Activated T-helper 2 cell treated with anti-CD3 and anti-CD28 coated beads, Interferon-gamma antibody, Interleukin-2, Interleukin-4, amounts not matched to agents 10 μg/mL and 5 μg/mL and 100 μg/mL, durations not matched to agents 14 hours and 24 hours and 36 hours (primary cell): ENCODE measurements at regions of chr2 and their contacts with region 1.

Region 1: GRCh38 chr2:15577071-15577735 is 14.5 kb upstream of the DDX1 start:
- DNase-seq: peak; percentile 74
- H3K4me3 Mint-ChIP-seq: no peak overlapping the region
- H3K27ac Mint-ChIP-seq: no peak overlapping the region
- H3K4me1 Mint-ChIP-seq: no peaks in the 10 kb centered on the region
- H3K27me3 Mint-ChIP-seq: peaks cover 2% of the 10 kb centered on the region

Region 2: DNA sequence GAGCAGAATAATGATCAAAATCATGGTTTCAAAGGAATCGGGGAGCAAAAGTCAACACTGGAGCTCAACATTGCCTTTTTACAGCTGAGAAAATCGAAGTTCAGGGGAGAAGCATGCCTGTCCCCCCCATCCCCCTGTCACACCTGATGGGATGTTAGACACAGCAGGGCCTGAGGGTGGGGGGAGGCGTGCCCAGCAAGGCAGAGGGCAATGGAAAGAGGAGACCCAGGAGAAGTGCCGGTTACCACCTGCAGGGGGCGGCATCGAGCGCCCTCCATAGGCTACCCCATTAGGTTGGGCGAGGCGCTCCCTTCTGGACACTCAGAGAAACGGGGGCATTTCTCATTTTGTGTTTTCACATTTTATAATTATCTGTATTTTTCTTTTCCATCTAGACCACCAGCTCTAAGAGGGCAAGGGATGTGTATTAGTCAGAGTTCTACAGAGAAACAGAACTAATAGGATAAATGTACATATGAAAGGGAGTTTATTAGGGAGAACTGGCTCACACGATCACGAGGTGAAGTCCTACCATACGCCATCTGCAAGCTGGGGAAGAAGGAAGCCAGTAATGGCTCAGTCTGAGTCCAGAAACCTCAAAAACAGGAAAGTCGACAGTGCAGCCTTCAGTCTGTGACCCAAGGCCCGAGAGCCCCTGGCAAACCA is 673.4 kb before region 1 on chr2:
- intact Hi-C with region 1: loop called (anchors 1 kb)
- DNase-seq: peak; percentile 55
- H3K4me3 Mint-ChIP-seq: no peak overlapping the region
- H3K27ac Mint-ChIP-seq: no peak overlapping the region
- H3K4me1 Mint-ChIP-seq: no peaks in the 10 kb centered on the region
- H3K27me3 Mint-ChIP-seq: no peaks in the 10 kb centered on the region

Region 3: DNA sequence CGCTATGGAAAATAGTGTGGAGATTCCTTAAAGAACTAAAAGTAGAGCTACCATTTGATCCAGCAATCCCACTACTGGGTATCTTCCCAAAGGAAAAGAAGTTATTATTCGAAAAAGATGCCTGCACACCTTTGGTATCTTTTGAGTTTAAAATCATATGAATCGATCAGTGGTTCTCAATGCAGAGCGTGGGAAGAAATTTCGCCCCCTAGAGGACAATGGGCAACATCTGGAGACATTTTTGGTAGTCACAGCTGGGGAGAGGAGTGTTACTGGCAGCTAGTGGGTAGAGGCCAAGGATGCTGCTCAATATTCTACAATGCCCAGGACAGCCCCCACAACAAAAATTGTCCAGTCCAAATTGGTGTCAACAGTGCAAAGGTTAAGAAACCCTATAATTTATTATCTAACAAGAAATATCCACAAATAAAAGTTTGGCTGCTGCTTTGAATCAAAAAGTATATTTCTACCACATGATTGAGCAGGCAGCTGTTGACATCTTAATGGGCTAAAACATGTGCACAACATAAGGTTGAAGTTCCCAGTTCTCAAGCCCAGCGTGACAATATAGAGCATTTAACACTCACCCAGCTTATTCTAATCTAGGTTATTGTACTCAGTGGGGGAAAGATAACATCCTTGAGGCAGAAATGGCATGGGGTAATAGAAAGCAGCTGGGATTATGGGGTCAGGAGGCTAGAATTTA is 519.0 kb before region 1 on chr2:
- intact Hi-C with region 1: loop called (anchors 10 kb)
- DNase-seq: no peak
- H3K4me3 Mint-ChIP-seq: no peak overlapping the region
- H3K27ac Mint-ChIP-seq: no peak overlapping the region
- H3K4me1 Mint-ChIP-seq: no peaks in the 10 kb centered on the region
- H3K27me3 Mint-ChIP-seq: peaks cover 8% of the 10 kb centered on the region

Region 4: GRCh38 chr2:15432642-15433256 is 144.5 kb before region 1 on chr2:
- intact Hi-C with region 1: loop called (anchors 5 kb)
- DNase-seq: no peak
- H3K4me3 Mint-ChIP-seq: no peak overlapping the region
- H3K27ac Mint-ChIP-seq: no peak overlapping the region
- H3K4me1 Mint-ChIP-seq: peaks cover 2% of the 10 kb centered on the region
- H3K27me3 Mint-ChIP-seq: no peaks in the 10 kb centered on the region

Region 5: DNA sequence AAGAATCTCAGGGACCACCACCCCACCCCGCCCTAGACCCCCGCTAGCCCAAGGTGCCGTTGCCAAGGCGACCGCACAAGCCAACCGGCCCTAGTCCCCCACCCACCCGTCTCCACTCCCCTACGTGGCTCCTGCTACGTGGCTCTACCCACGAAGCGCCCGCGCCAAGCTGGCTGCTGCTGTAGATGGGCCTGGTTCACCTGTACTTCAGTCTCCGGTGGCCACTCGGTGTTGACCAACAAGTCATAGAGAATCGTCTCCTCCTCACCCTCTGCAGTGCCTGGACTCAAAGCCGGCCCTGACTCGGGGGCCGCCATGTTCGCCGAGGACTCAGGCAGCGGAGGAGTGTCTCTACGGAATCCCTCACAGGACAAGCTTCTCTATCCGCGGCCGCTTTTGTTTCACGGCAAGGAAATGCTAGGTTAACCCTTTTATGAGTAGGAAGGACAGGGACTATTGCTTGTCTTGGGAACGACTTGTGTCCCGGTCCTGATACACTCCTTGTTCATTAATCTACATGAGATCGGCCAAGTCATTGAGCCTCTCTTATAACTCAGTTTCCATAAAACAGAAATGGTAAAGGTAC is 16.1 kb before region 1 on chr2 and contains the start of gene NBAS:
- intact Hi-C with region 1: loop called (anchors 1 kb)
- DNase-seq: peak; percentile 66
- H3K4me3 Mint-ChIP-seq: peak within 1 kb of the TSS; percentile 99
- H3K27ac Mint-ChIP-seq: peak within 1 kb of the TSS; percentile 92
- H3K4me1 Mint-ChIP-seq: peaks cover 33% of the 10 kb centered on the region
- H3K27me3 Mint-ChIP-seq: peaks cover 14% of the 10 kb centered on the region
- total RNA-seq, gene NBAS: 37.2 and 38.7 TPM in 2 replicates

Region 6: DNA sequence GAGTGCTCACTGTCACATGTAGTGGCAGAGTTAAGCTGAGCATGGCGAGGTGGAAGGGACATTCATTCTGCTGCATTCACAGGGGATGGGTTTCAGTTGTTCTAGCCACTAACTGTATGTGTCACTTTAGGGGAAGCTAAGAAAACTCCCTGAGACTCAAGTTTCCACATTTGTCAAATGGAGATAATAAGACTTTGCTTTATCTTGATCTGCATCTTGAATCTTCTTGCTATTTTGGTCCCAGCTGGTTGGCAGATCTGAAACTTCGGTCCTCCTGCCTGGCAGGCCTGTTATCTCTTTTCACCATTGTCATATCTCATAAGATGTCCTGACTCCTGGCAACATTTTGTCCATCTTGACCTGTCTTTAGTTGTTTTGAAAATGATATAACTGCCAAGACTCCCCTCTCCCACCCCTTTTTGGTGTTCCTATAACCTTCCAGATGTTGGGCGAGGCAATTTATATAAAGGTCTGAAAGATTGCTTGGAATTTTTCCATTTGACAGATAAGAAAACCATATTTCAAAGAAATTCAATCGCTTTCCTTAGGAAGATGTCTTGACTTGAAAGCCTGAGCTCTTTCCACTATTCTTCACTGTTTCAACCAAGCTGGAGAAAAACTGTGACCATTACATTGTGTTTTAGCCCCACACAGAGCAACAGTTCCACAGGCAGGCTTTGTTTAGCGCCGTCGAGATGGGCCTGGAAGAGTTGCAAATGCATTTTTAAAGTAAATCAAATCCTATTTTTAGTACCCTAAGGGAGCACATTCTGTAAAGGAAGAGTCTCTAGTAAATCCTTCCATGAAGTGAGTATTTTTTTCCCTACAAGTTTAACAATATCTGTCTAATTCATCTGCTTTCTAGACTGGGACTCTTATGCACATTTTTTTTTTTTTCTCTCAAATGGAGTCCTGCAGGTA is 396.5 kb after region 1 on chr2:
- intact Hi-C with region 1: no loop called
- DNase-seq: no peak
- H3K4me3 Mint-ChIP-seq: no peak overlapping the region
- H3K27ac Mint-ChIP-seq: no peak overlapping the region
- H3K4me1 Mint-ChIP-seq: peaks cover 16% of the 10 kb centered on the region
- H3K27me3 Mint-ChIP-seq: no peaks in the 10 kb centered on the region